ENCODE measurements at regions of chr12 and their contacts with region 1.

Region 1: GRCh38 chr12:101490286-101490920 is 15.3 kb downstream of the SPIC start:
- DNase-seq: peak; percentile 60
- H3K4me3 Mint-ChIP-seq: no peak overlapping the region
- H3K27ac Mint-ChIP-seq: no peak overlapping the region
- H3K4me1 Mint-ChIP-seq: no peaks in the 10 kb centered on the region
- H3K27me3 Mint-ChIP-seq: peaks cover 16% of the 10 kb centered on the region
- CTCF ChIP-seq: peak; percentile 34

Region 2: DNA sequence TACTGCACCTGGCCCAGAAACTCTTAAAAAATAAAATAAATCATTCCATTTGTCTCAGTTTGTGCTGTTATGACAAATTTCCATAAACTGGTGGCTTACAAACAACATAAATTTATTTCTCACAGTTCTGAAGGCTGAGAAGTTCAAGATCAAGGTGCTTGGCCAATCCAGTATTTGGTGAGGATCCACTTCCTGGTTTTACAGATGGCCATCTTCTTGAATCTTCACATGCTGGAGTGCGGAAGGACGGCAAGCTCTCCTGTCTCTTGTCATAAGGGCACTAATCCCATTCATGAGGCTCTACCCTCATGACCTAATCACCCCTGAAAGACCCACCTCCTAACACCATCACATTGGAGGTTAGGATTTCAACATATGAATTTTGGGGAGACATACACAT is 74.5 kb after region 1 on chr12:
- CTCF ChIA-PET with region 1: no interaction called
- intact Hi-C with region 1: no loop called
- DNase-seq: no peak
- H3K4me3 Mint-ChIP-seq: no peak overlapping the region
- H3K27ac Mint-ChIP-seq: no peak overlapping the region
- H3K4me1 Mint-ChIP-seq: peaks cover 9% of the 10 kb centered on the region
- H3K27me3 Mint-ChIP-seq: no peaks in the 10 kb centered on the region
- CTCF ChIP-seq: no peak

Region 3: GRCh38 chr12:101759396-101760047 is 269.1 kb after region 1 on chr12:
- CTCF ChIA-PET with region 1: interaction called, 4 read pairs
- intact Hi-C with region 1: loop called (anchors 1 kb)
- DNase-seq: peak; percentile 24
- H3K4me3 Mint-ChIP-seq: no peak overlapping the region
- H3K27ac Mint-ChIP-seq: no peak overlapping the region
- H3K4me1 Mint-ChIP-seq: peaks cover 6% of the 10 kb centered on the region
- H3K27me3 Mint-ChIP-seq: no peaks in the 10 kb centered on the region
- CTCF ChIP-seq: peak; percentile 46

Region 4: GRCh38 chr12:101830367-101831325 is 340.2 kb after region 1 on chr12 and contains the start of gene GNPTAB:
- CTCF ChIA-PET with region 1: no interaction called
- intact Hi-C with region 1: loop called (anchors 5 kb)
- DNase-seq: peak; percentile 97
- H3K4me3 Mint-ChIP-seq: peak within 1 kb of the TSS; percentile 92
- H3K27ac Mint-ChIP-seq: peak within 1 kb of the TSS; percentile 73
- H3K4me1 Mint-ChIP-seq: peaks cover 8% of the 10 kb centered on the region
- H3K27me3 Mint-ChIP-seq: no peaks in the 10 kb centered on the region
- CTCF ChIP-seq: no peak
- total RNA-seq, gene GNPTAB: 34.0 and 36.0 TPM in 2 replicates

Region 5: GRCh38 chr12:102169922-102170621 is 679.7 kb after region 1 on chr12:
- CTCF ChIA-PET with region 1: no interaction called
- intact Hi-C with region 1: no loop called
- DNase-seq: peak; percentile 20
- H3K4me3 Mint-ChIP-seq: no peak overlapping the region
- H3K27ac Mint-ChIP-seq: no peak overlapping the region
- H3K4me1 Mint-ChIP-seq: peaks cover 7% of the 10 kb centered on the region
- H3K27me3 Mint-ChIP-seq: no peaks in the 10 kb centered on the region
- CTCF ChIP-seq: peak; percentile 46